ENCODE measurements at regions of chr9 and their contacts with region 1.

Region 1: GRCh38 chr9:98074115-98074990 is 17.8 kb downstream of the NANS start:
- DNase-seq: no peak
- H3K4me3 ChIP-seq: no peak overlapping the region
- H3K27ac ChIP-seq: no peak overlapping the region
- H3K27me3 ChIP-seq: no peaks in the 10 kb centered on the region
- CTCF ChIP-seq: peak; percentile 96

Region 2: DNA sequence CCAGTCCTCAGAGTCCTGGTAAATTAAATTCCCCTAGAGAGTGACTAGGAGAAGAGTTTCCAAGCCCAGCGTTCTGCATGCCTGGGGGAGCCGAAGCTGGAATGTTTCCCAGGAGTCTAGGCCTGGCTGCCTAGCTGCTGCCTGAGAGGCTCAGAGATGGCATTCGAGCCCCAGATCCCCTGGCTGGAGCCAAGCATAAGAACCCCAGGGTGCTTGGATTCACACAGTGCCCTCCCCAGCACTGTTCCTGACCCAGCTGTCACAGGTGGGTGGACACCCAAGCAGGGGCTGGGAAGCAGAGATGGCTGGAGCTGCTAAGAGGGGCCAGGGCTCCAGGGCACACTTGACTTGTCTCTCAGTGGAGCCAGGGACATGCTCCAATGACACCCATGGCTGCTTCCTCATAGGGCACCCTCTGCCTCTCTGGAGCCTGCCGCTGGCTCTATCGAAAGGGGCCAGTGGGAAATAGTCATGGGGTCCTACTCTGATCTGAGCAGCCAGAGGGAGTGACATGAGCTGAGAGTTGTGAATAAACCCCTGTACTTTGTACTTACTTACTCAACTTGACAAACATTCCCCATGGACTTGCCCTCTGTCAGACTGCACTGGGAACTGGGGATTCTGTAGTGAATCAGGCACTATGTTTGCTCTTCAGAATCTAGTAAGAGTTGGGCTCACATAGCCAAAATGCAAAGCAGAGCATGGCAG is 314.6 kb before region 1 on chr9:
- CTCF ChIA-PET with region 1: no interaction called
- POLR2A ChIA-PET with region 1: no interaction called
- DNase-seq: no peak
- H3K4me3 ChIP-seq: no peak overlapping the region
- H3K27ac ChIP-seq: no peak overlapping the region
- H3K27me3 ChIP-seq: peaks cover 34% of the 10 kb centered on the region
- CTCF ChIP-seq: no peak

Region 3: DNA sequence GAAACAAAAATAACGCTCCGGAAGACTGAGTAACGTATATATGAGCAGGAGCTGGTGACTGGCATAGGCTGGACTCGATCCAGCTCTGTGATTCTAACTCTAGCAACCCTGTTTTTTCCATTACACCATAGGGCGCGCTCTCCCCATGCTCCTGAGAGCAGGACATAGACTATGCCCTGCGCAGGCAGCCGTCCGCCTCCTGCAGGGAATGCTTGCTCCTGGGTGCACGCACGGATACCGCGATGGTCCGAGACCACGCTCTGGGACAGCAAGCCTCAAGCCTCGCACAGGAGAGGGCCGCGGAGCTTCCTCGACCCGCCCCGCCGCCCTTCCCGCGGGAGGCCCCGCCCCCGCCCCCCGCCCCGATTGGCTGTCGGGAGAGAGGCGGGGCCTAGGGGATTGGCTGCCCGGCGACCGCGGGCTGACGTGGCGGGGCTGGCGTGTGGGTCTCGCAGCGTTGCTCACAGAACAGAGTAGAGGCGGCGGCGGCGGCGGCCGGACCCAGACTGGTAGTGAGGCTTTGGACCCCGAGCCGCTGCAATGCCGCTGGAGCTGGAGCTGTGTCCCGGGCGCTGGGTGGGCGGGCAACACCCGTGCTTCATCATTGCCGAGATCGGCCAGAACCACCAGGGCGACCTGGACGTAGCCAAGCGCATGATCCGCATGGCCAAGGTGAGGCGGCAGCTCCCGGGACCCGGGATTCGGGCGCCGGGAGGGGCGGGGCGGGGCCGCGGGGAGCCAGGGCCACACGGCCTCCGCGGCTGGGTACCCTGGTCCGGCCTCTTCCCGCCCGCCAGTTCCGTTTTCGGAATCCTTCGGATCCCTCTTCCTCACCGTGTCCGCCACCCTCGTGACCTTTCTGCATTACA is 17.9 kb before region 1 on chr9 and contains the start of gene NANS:
- CTCF ChIA-PET with region 1: interaction called, 18 read pairs
- POLR2A ChIA-PET with region 1: no interaction called
- DNase-seq: peak; percentile 85
- H3K4me3 ChIP-seq: peak within 1 kb of the TSS; percentile 90
- H3K27ac ChIP-seq: peak within 1 kb of the TSS; percentile 86
- H3K27me3 ChIP-seq: no peaks in the 10 kb centered on the region
- CTCF ChIP-seq: peak; percentile 21
- polyA plus RNA-seq, gene NANS: 111 and 122 TPM in 2 replicates

Region 4: GRCh38 chr9:98062151-98062550 is 12.2 kb before region 1 on chr9:
- CTCF ChIA-PET with region 1: interaction called, 18 read pairs
- POLR2A ChIA-PET with region 1: no interaction called
- DNase-seq: no peak
- H3K4me3 ChIP-seq: no peak overlapping the region
- H3K27ac ChIP-seq: no peak overlapping the region
- H3K27me3 ChIP-seq: no peaks in the 10 kb centered on the region
- CTCF ChIP-seq: no peak

Region 5: GRCh38 chr9:98192503-98193335 is 118.4 kb after region 1 on chr9 and contains the start of gene CORO2A:
- CTCF ChIA-PET with region 1: interaction called, 12 read pairs
- POLR2A ChIA-PET with region 1: no interaction called
- DNase-seq: peak; percentile 7
- H3K4me3 ChIP-seq: peak within 1 kb of the TSS; percentile 74
- H3K27ac ChIP-seq: no peak within 1 kb of the TSS
- H3K27me3 ChIP-seq: peaks cover 7% of the 10 kb centered on the region
- CTCF ChIP-seq: peak; percentile 61
- polyA plus RNA-seq, gene CORO2A: 1.4 TPM in 2 replicates

Region 6: GRCh38 chr9:98255578-98256296 is 181.4 kb after region 1 on chr9 and contains the start of gene TBC1D2:
- CTCF ChIA-PET with region 1: interaction called, 24 read pairs
- POLR2A ChIA-PET with region 1: no interaction called
- DNase-seq: peak; percentile 74
- H3K4me3 ChIP-seq: peak within 1 kb of the TSS; percentile 90
- H3K27ac ChIP-seq: peak within 1 kb of the TSS; percentile 90
- H3K27me3 ChIP-seq: no peaks in the 10 kb centered on the region
- CTCF ChIP-seq: 0 out of 2 replicates have a peak, but pooled peaks have one; percentile 24
- polyA plus RNA-seq, gene TBC1D2: 17.2 and 21.9 TPM in 2 replicates

Region 7: DNA sequence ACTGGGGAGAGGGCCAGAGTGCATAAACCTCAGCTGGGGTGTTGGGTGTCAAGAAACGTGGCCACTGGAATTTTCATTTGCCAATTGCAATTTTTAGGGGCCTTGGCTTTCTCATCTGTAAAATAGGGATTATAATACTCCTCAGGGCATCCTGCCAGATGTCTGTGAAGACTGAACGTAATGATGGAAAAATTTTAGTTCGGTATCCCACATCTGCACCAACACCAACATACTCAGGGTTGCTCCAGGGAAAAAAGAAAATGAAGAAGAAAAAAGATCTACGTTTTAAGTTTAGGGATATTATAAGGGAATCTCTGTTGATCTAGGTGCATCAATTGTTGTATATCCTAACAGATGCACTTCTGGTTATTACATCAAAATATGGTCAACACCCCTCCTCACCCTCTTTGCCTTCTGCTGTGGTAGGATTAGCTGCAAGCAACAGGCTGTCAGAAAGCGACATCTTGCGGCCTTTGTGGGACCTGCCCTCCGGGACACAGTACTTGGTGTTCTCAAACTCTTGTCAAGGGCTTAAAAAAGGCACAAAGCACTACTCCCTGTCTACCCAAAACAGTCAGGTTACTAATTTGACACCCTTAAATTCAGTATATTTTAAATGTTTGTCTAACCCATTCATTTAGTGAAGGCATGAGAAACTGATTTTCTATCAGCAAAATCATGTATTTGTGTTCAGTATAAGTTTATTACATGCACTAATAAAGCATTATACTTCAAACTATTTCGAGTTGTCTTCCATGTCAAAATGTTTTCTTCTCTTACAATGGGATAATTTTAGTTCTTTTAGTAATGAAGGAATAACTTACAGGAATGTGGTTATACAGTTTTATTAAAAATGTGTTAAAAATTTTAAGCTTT is 189.4 kb after region 1 on chr9:
- CTCF ChIA-PET with region 1: interaction called, 11 read pairs
- POLR2A ChIA-PET with region 1: no interaction called
- DNase-seq: peak; percentile 61
- H3K4me3 ChIP-seq: no peak overlapping the region
- H3K27ac ChIP-seq: no peak overlapping the region
- H3K27me3 ChIP-seq: no peaks in the 10 kb centered on the region
- CTCF ChIP-seq: peak; percentile 99